ENCODE measurements at regions of chr16 and their contacts with region 1.

Region 1: DNA sequence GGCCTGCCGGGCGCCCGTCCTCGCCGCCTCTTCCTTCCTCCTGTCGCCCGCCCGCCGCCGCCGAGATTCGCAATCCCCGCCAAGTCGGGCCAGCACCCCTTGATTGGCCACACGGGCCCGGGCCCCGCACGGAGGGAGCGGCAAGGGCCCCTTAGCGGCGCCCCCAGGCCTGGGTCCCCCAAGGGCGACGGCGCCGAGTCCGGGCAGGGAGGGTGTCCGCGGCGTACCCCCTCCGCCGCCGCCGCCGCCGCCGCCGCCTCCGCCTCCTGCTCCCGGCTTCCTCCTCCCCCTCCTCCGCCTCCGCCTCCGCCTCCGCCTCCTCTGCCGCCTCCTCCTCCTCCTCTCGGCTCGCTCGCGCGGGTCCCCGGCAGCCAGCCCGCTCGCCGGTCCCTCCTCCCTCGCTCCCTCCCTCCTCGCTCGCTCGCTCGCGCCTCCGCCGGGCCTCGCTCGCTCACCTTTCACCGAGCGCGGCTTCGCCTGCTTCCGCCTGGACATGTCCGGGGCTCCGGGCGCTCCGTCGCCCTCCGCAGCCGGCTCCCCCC is 561 bp downstream of the ZNF423 start:
- DNase-seq: no peak
- H3K4me3 ChIP-seq: peak overlapping the region; percentile 84 to 96 (median 87)
- H3K27ac ChIP-seq: peak overlapping the region; percentile 94 to 97 (median 96)
- H3K4me1 ChIP-seq: peaks cover 30 to 71% (median 68%) of the 10 kb centered on the region in 4 donors
- H3K27me3 ChIP-seq: peaks cover 0 to 5% (median 0%) of the 10 kb centered on the region in 4 donors
- CTCF ChIP-seq: peak in 1 of 3 experiments; percentile 15
- EP300 ChIP-seq: no peak
- POLR2A ChIP-seq: peak; percentile 75

Region 2: GRCh38 chr16:49652456-49653172 is 202.7 kb before region 1 on chr16:
- intact Hi-C with region 1: no loop called
- DNase-seq: no peak
- H3K4me3 ChIP-seq: peak overlapping the region in 2 of 4 donors; percentile 8 to 13
- H3K27ac ChIP-seq: peak overlapping the region in 3 of 4 donors; percentile 45 to 68 (median 66)
- H3K4me1 ChIP-seq: peaks cover 0 to 8% (median 3%) of the 10 kb centered on the region in 4 donors
- H3K27me3 ChIP-seq: no peaks in the 10 kb centered on the region
- CTCF ChIP-seq: no peak
- EP300 ChIP-seq: no peak
- POLR2A ChIP-seq: no peak

Region 3: GRCh38 chr16:49663081-49664065 is 192.0 kb before region 1 on chr16:
- intact Hi-C with region 1: loop called (anchors 5 kb)
- DNase-seq: no peak
- H3K4me3 ChIP-seq: peak overlapping the region; percentile 40 to 48 (median 42)
- H3K27ac ChIP-seq: peak overlapping the region; percentile 79 to 88 (median 84)
- H3K4me1 ChIP-seq: peaks cover 21 to 63% (median 49%) of the 10 kb centered on the region in 4 donors
- H3K27me3 ChIP-seq: no peaks in the 10 kb centered on the region
- CTCF ChIP-seq: no peak
- EP300 ChIP-seq: no peak
- POLR2A ChIP-seq: no peak

Region 4: DNA sequence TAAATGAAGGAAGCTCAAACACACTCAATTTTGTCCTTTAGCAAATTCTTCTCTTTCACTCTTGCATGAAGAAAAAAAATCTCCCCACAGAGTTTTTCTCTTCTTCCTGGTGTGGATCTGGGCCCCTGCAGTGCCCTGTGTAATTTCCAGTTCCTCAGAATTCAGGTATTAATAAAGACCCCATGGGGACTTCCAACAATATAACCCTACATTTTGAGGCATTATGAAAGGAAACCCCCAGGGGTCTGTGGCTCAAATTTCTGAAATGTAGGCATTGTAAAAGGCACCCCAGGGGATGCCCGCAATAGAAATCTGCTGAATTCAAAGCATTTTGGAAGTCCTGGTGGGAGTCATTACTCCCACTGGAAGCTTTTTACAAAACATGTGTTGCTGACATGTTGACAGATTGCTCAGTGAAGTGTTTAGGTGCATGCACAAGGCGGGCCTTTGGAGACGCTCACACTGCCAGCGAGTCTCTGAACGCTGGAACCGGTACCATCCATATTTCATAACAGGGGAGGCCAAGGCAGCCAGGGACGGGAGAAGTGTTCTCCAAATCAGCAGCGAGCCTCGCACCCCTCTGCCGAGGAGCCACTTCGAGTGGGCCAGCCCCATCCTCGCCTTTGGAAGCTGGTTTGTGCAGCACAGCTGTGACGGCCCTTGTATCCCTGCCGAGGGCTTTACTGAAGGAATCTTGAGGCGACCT is 153.4 kb before region 1 on chr16:
- intact Hi-C with region 1: loop called (anchors 5 kb)
- DNase-seq: no peak
- H3K4me3 ChIP-seq: peak overlapping the region; percentile 0 to 32 (median 24)
- H3K27ac ChIP-seq: peak overlapping the region; percentile 62 to 77 (median 73)
- H3K4me1 ChIP-seq: peaks cover 36 to 56% (median 53%) of the 10 kb centered on the region in 4 donors
- H3K27me3 ChIP-seq: no peaks in the 10 kb centered on the region
- CTCF ChIP-seq: no peak
- EP300 ChIP-seq: no peak
- POLR2A ChIP-seq: no peak

Region 5: GRCh38 chr16:49739381-49739780 is 116.0 kb before region 1 on chr16:
- intact Hi-C with region 1: no loop called
- DNase-seq: no peak
- H3K4me3 ChIP-seq: no peak overlapping the region
- H3K27ac ChIP-seq: no peak overlapping the region
- H3K4me1 ChIP-seq: peaks cover 0 to 11% (median 8%) of the 10 kb centered on the region in 4 donors
- H3K27me3 ChIP-seq: no peaks in the 10 kb centered on the region
- CTCF ChIP-seq: no peak
- EP300 ChIP-seq: no peak
- POLR2A ChIP-seq: no peak

Region 6: DNA sequence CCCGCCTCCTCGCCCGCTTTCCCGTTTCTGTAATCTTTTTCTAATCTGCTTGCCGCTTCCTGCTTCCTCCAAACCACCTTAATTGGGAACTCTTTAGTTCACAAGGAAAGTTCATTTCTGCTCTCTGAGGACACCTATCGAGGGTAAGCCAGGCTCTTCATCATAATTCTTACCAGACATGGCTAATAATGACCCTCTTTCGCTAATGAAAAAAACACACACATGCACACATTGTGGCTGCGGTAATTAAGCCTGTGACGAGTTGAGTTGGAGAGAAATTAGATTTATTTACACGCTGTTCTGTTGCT is 100.1 kb before region 1 on chr16:
- intact Hi-C with region 1: loop called (anchors 5 kb)
- DNase-seq: no peak
- H3K4me3 ChIP-seq: peak overlapping the region; percentile 51 to 60 (median 56)
- H3K27ac ChIP-seq: peak overlapping the region; percentile 64 to 74 (median 70)
- H3K4me1 ChIP-seq: peaks cover 30 to 42% (median 31%) of the 10 kb centered on the region in 4 donors
- H3K27me3 ChIP-seq: no peaks in the 10 kb centered on the region
- CTCF ChIP-seq: peak; percentile 44 to 59 (median 51)
- EP300 ChIP-seq: no peak
- POLR2A ChIP-seq: no peak

Region 7: GRCh38 chr16:49899991-49900695 is 44.8 kb after region 1 on chr16:
- intact Hi-C with region 1: no loop called
- DNase-seq: no peak
- H3K4me3 ChIP-seq: no peak overlapping the region
- H3K27ac ChIP-seq: no peak overlapping the region
- H3K4me1 ChIP-seq: no peaks in the 10 kb centered on the region
- H3K27me3 ChIP-seq: peaks cover 0 to 19% (median 0%) of the 10 kb centered on the region in 4 donors
- CTCF ChIP-seq: no peak
- EP300 ChIP-seq: no peak
- POLR2A ChIP-seq: no peak

Measured in esophagus muscularis mucosa (tissue), 4 donors.